Colonic mucosa (tissue), 4 donors: ENCODE measurements at regions of chr1 and their contacts with region 1.

Region 1: GRCh38 chr1:232950197-232951176 is at the start of gene NTPCR:
- DNase-seq: peak; percentile 96
- H3K4me3 ChIP-seq: peak within 1 kb of the TSS; percentile 85
- H3K27ac ChIP-seq: peak within 1 kb of the TSS; percentile 71
- H3K4me1 ChIP-seq: no peaks in the 10 kb centered on the region
- H3K27me3 ChIP-seq: no peaks in the 10 kb centered on the region
- CTCF ChIP-seq: no peak
- total RNA-seq, gene NTPCR: 57.0 to 64.8 TPM

Region 2: GRCh38 chr1:232751393-232752140 is 198.9 kb before region 1 on chr1:
- intact Hi-C with region 1: loop called (anchors 10 kb)
- DNase-seq: no peak
- H3K4me3 ChIP-seq: no peak overlapping the region
- H3K27ac ChIP-seq: no peak overlapping the region
- H3K4me1 ChIP-seq: no peaks in the 10 kb centered on the region
- H3K27me3 ChIP-seq: no peaks in the 10 kb centered on the region
- CTCF ChIP-seq: no peak

Region 3: DNA sequence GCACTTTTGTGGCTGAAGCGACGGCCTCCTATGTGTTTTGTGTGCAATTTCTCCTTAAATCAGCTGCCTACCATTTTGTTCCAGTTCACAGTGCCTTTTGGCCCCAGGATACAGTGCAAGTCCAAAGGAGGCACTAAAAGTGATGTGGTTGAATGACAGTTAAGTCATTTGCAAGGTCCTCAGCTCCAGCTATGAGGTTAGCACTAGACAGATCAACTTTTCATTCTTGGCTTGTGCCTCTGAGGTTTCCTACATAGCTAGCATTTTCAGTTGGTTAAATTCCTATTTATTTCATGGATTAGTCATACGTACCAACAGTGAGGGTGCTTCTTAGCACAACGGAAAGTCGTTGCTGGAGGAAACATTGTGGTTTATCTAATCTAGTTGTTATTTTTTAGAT is 59.4 kb before region 1 on chr1:
- intact Hi-C with region 1: no loop called
- DNase-seq: no peak
- H3K4me3 ChIP-seq: no peak overlapping the region
- H3K27ac ChIP-seq: no peak overlapping the region
- H3K4me1 ChIP-seq: no peaks in the 10 kb centered on the region
- H3K27me3 ChIP-seq: no peaks in the 10 kb centered on the region
- CTCF ChIP-seq: no peak